Adrenal gland (tissue), 19 donors: ENCODE measurements at regions of chr11 and their contacts with region 1.

Region 1: DNA sequence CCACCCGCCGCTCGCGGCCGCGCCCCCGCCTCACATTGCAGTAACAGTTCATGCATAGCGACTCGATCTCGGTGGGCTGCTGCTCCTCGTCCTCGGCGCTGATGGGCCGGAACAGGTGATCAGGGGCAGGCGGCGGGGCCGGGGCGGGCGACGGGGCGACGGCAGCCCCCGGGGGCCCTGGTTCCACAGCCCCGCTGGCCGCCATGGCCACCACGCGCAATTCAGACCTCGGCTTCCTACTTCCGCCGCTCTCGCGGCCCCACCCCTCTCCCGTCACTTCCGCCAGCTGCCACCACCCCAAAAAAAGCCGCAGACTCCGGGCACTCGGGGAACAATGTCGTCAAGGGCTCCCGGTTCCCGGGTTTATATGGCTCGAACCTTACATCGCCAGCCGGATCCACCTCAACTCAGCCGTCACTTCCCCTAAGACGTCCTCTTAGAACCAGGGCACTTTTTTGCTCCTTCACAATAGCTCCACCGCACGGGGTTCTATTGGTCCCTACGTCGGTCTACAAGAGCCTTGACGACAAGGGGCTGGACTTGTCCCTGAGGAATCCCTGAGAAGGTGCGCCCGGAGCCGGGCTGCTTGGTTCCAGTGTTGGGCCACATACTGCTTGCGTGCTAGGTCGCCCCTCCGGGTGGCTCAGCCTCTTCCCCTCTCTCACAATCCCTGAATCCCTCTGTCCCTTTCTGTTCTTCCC is at the start of gene ZPR1:
- DNase-seq: peak; percentile 76 to 89 (median 79)
- H3K4me3 ChIP-seq: peak within 1 kb of the TSS; percentile 30 to 97 (median 81)
- H3K27ac ChIP-seq: peak within 1 kb of the TSS; percentile 41 to 83 (median 68)
- H3K4me1 ChIP-seq: peaks cover 0 to 9% of the 10 kb centered on the region in 2 donors
- H3K27me3 ChIP-seq: no peaks in the 10 kb centered on the region
- CTCF ChIP-seq: peak in 3 of 6 experiments; percentile 13 to 25 (median 20)
- POLR2A ChIP-seq: peak in 1 of 2 donors; percentile 48
- total RNA-seq, gene ZPR1: 10.8 to 61.8 (median 30.4) TPM

Region 2: DNA sequence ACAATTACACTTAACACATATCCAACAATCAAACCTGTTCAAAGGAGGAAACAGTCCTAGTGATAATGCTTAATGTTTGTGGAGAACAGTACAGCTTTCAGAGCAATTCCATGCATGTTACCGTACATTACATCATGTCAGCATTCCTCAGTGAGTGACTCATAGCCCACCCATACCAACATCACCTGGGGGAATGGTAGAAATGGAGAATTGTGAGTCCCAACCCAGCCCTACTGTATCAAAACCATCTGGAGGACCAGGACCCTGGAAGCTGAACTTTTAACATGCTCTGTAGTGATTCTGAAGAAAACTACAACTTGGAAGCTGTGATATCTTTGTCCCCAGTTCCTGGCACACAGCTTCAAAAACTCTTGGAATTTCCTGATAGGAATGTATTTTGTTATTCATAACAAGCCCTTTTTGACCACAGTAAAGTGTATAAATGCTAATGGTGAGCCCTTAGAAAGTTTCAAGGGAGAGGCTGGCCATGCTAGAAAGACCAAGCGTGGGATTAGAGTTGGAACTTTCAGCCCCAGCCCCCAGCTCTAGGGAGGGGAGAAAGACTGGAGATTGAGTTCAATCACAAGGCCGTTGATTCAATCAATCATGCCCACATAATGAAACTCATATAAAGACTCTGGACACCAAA is 316.2 kb before region 1 on chr11:
- intact Hi-C with region 1: no loop called
- DNase-seq: no peak
- H3K4me3 ChIP-seq: no peak overlapping the region
- H3K27ac ChIP-seq: no peak overlapping the region
- H3K4me1 ChIP-seq: peaks cover 0 to 4% of the 10 kb centered on the region in 2 donors
- H3K27me3 ChIP-seq: no peaks in the 10 kb centered on the region
- CTCF ChIP-seq: no peak
- POLR2A ChIP-seq: no peak

Region 3: DNA sequence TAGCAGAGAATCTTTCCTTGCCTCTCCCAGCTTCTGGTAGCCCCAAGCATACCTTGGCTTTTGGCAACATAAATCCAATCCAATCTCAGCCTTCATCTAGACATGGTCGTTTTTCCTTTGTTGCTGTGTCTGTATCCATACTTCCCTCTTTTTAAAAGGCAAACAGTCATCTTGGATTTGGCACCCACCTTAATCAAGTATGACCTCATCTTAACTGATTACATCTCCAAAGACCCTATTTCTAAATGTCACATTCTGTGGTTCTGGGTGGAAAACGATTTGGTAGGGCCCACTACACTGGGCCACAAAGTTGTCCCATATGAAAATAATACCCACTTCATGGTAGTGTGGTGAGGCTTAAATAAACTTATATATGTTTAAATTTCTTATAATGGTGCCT is 16.0 kb before region 1 on chr11:
- intact Hi-C with region 1: no loop called
- DNase-seq: no peak
- H3K4me3 ChIP-seq: peak overlapping the region in 2 of 4 donors; percentile 85 to 93
- H3K27ac ChIP-seq: peak overlapping the region in 1 of 5 donors; percentile 89
- H3K4me1 ChIP-seq: peaks cover 16 to 26% of the 10 kb centered on the region in 2 donors
- H3K27me3 ChIP-seq: no peaks in the 10 kb centered on the region
- CTCF ChIP-seq: no peak
- POLR2A ChIP-seq: no peak

Region 4: DNA sequence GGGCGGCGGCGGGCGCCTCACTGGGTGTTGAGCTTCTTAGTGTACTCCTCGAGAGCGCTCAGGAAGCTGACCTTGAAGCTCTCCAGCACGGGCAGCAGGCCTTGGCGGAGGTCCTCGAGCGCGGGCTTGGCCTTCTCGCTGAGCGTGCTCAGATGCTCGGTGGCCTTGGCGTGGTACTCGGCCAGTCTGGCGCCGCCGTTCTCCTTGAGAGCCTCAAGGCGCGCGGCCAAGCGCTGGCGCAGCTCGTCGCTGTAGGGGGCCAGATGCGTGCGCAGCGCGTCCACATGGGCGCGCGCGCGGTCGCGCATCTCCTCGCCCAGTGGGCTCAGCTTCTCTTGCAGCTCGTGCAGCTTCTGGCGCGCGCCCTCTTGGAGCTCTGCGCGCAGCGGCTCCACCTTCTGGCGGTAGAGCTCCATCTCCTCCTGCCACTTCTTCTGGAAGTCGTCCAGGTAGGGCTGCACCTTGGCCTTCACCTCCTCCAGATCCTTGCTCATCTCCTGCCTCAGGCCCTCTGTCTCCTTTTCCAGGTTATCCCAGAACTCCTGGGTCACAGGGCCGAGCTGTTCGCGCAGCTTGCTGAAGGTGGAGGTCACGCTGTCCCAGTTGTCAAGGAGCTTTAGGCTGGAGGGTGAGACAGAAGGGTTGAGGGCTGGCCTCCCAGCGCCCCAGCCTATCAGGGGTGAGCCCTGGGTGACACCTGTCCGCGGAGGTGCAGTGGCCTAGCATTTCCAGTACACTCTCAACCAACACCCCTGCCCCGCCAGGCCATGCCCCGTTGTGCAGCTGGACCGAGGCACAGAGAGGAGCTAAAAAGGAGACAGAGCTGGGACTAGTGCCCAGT is 48.1 kb after region 1 on chr11:
- intact Hi-C with region 1: loop called in 1 of 2 experiments (anchors 5 kb)
- DNase-seq: peak; percentile 76 to 91 (median 86)
- H3K4me3 ChIP-seq: peak overlapping the region in 1 of 4 donors; percentile 44
- H3K27ac ChIP-seq: peak overlapping the region in 3 of 5 donors; percentile 14 to 73 (median 56)
- H3K4me1 ChIP-seq: peaks cover 9 to 17% of the 10 kb centered on the region in 2 donors
- H3K27me3 ChIP-seq: no peaks in the 10 kb centered on the region
- CTCF ChIP-seq: peak; percentile 11 to 53 (median 37)
- POLR2A ChIP-seq: no peak

Region 5: GRCh38 chr11:116879800-116880625 is 92.1 kb after region 1 on chr11:
- intact Hi-C with region 1: loop called in 1 of 2 experiments (anchors 5 kb)
- DNase-seq: peak in 2 of 7 donors; percentile 33 to 47
- H3K4me3 ChIP-seq: no peak overlapping the region
- H3K27ac ChIP-seq: no peak overlapping the region
- H3K4me1 ChIP-seq: no peaks in the 10 kb centered on the region
- H3K27me3 ChIP-seq: no peaks in the 10 kb centered on the region
- CTCF ChIP-seq: peak; percentile 31 to 74 (median 68)
- POLR2A ChIP-seq: no peak

Region 6: GRCh38 chr11:117107701-117108590 is 320.0 kb after region 1 on chr11:
- intact Hi-C with region 1: loop called (anchors 5 to 10 kb)
- DNase-seq: no peak
- H3K4me3 ChIP-seq: no peak overlapping the region
- H3K27ac ChIP-seq: no peak overlapping the region
- H3K4me1 ChIP-seq: no peaks in the 10 kb centered on the region
- H3K27me3 ChIP-seq: no peaks in the 10 kb centered on the region
- CTCF ChIP-seq: no peak
- POLR2A ChIP-seq: no peak

Region 7: GRCh38 chr11:117226388-117227385 is 438.8 kb after region 1 on chr11:
- intact Hi-C with region 1: loop called in 1 of 2 experiments (anchors 10 kb)
- DNase-seq: peak; percentile 55 to 79 (median 66)
- H3K4me3 ChIP-seq: no peak overlapping the region
- H3K27ac ChIP-seq: no peak overlapping the region
- H3K4me1 ChIP-seq: peaks cover 11 to 22% of the 10 kb centered on the region in 2 donors
- H3K27me3 ChIP-seq: no peaks in the 10 kb centered on the region
- CTCF ChIP-seq: peak; percentile 61 to 91 (median 84)
- POLR2A ChIP-seq: no peak

Region 8: DNA sequence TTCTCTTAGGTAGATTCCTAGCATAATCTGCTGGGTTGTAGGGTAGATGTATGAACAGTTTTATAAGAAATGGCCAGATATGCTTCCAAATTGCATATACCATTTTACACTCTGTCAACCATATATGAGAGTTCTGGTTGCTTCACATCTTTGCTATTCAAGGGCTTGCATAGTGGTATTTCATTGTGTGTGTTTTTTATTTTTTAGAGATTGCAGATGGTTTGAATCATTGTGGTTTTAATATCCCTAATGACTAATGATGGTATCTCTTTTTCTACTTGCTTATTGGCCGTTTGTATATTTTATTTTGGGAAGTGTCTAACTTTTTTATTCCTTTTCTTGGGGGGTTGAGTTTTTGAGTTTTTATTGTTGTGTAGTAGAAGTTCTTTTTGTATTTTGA is 471.5 kb after region 1 on chr11:
- intact Hi-C with region 1: no loop called
- DNase-seq: no peak
- H3K4me3 ChIP-seq: no peak overlapping the region
- H3K27ac ChIP-seq: no peak overlapping the region
- H3K4me1 ChIP-seq: no peaks in the 10 kb centered on the region
- H3K27me3 ChIP-seq: no peaks in the 10 kb centered on the region
- CTCF ChIP-seq: no peak
- POLR2A ChIP-seq: no peak